GM10248 (cell line): ENCODE measurements at regions of chr11 and their contacts with region 1.

Region 1: DNA sequence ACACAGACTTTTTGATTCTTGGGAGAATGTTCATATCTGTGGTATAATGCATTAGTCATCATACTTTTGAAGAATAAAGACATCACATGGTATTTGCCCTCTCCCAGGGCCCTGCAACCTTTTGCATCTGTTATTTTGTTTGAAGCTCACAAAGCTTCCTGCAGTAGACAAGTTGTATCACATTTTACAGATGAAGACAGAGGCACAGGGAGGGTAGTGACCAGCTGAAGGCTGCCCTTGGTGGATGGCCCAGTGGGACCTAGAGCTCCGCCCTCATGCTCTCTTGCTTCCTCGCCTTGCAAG is 66.4 kb downstream of the UBASH3B start:
- DNase-seq: no peak
- CTCF ChIP-seq: no peak

Region 2: DNA sequence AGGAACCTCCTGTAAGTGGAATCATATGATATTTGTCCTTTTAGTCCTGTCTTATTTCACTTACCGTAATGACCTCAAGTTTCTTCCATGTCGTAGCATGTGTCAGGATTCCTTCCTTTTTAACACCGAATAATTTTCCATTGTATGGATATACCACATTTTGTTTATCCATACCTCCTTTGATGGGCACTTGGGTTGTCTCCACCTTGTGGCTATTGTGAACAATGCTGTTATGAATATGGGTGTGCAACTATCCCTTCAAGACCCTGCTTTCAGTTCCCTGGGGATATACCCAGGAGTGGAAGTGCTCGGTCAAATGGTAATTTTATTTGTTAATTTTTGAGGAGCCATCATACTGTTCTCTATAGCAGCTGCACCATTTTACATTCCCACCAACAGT is 361.0 kb before region 1 on chr11:
- CTCF ChIA-PET with region 1: no interaction called
- POLR2A ChIA-PET with region 1: no interaction called
- DNase-seq: no peak
- CTCF ChIP-seq: no peak

Region 3: GRCh38 chr11:122733318-122733717 is 11.4 kb after region 1 on chr11:
- CTCF ChIA-PET with region 1: interaction called, 22 read pairs
- POLR2A ChIA-PET with region 1: no interaction called
- DNase-seq: no peak
- CTCF ChIP-seq: no peak